ENCODE measurements at regions of chr6 and their contacts with region 1.

Region 1: GRCh38 chr6:127938701-127939100 is 37.8 kb upstream of the THEMIS start:
- DNase-seq: no peak
- ATAC-seq: no peak
- H3K4me3 ChIP-seq: no peak overlapping the region
- H3K4me3 Mint-ChIP-seq: peak overlapping the region in 2 of 10 donors; percentile 14 to 39
- H3K27ac ChIP-seq: no peak overlapping the region
- H3K27ac Mint-ChIP-seq: peak overlapping the region in 5 of 9 donors; percentile 28 to 97 (median 57)
- H3K4me1 ChIP-seq: peaks cover 25 to 40% of the 10 kb centered on the region in 2 donors
- H3K4me1 Mint-ChIP-seq: peaks cover 21 to 81% (median 63%) of the 10 kb centered on the region in 7 donors
- H3K27me3 ChIP-seq: no peaks in the 10 kb centered on the region
- H3K27me3 Mint-ChIP-seq: no peaks in the 10 kb centered on the region

Region 2: GRCh38 chr6:127924440-127924839 is 14.3 kb before region 1 on chr6:
- CTCF ChIA-PET with region 1: interaction called, 6 read pairs
- POLR2A ChIA-PET with region 1: interaction called, 30 read pairs
- intact Hi-C with region 1: loop called in 1 of 2 experiments (anchors 1 kb)
- DNase-seq: no peak
- ATAC-seq: no peak
- H3K4me3 ChIP-seq: no peak overlapping the region
- H3K4me3 Mint-ChIP-seq: peak overlapping the region in 5 of 10 donors; percentile 5 to 88 (median 21)
- H3K27ac ChIP-seq: no peak overlapping the region
- H3K27ac Mint-ChIP-seq: peak overlapping the region in 5 of 9 donors; percentile 6 to 98 (median 16)
- H3K4me1 ChIP-seq: peaks cover 54 to 59% of the 10 kb centered on the region in 2 donors
- H3K4me1 Mint-ChIP-seq: peaks cover 28 to 72% (median 59%) of the 10 kb centered on the region in 7 donors
- H3K27me3 ChIP-seq: no peaks in the 10 kb centered on the region
- H3K27me3 Mint-ChIP-seq: no peaks in the 10 kb centered on the region

Region 3: GRCh38 chr6:128039543-128039942 is 100.8 kb after region 1 on chr6:
- CTCF ChIA-PET with region 1: no interaction called
- POLR2A ChIA-PET with region 1: no interaction called
- intact Hi-C with region 1: no loop called
- DNase-seq: no peak
- ATAC-seq: no peak
- H3K4me3 ChIP-seq: no peak overlapping the region
- H3K4me3 Mint-ChIP-seq: no peak overlapping the region
- H3K27ac ChIP-seq: no peak overlapping the region
- H3K27ac Mint-ChIP-seq: no peak overlapping the region
- H3K4me1 ChIP-seq: no peaks in the 10 kb centered on the region
- H3K4me1 Mint-ChIP-seq: peaks cover 0 to 21% (median 4%) of the 10 kb centered on the region in 7 donors
- H3K27me3 ChIP-seq: no peaks in the 10 kb centered on the region
- H3K27me3 Mint-ChIP-seq: no peaks in the 10 kb centered on the region

Measured in naive thymus-derived CD4-positive, alpha-beta T cell (primary cell).